Ovary (tissue), 10 donors: ENCODE measurements at regions of chr14 and their contacts with region 1.

Region 1: GRCh38 chr14:88154926-88155325 is 150.0 kb downstream of the GPR65 start:
- DNase-seq: no peak
- H3K4me3 ChIP-seq: no peak overlapping the region
- H3K27ac ChIP-seq: no peak overlapping the region
- H3K4me1 ChIP-seq: no peaks in the 10 kb centered on the region
- H3K27me3 ChIP-seq: no peaks in the 10 kb centered on the region
- CTCF ChIP-seq: no peak
- EP300 ChIP-seq: no peak
- POLR2A ChIP-seq: no peak

Region 2: GRCh38 chr14:86946446-86946845 is 1208.5 kb before region 1 on chr14:
- intact Hi-C with region 1: loop called in 1 of 4 experiments (anchors 5 kb)
- DNase-seq: no peak
- H3K4me3 ChIP-seq: no peak overlapping the region
- H3K27ac ChIP-seq: no peak overlapping the region
- H3K4me1 ChIP-seq: no peaks in the 10 kb centered on the region
- H3K27me3 ChIP-seq: no peaks in the 10 kb centered on the region
- CTCF ChIP-seq: no peak
- EP300 ChIP-seq: no peak
- POLR2A ChIP-seq: no peak

Region 3: DNA sequence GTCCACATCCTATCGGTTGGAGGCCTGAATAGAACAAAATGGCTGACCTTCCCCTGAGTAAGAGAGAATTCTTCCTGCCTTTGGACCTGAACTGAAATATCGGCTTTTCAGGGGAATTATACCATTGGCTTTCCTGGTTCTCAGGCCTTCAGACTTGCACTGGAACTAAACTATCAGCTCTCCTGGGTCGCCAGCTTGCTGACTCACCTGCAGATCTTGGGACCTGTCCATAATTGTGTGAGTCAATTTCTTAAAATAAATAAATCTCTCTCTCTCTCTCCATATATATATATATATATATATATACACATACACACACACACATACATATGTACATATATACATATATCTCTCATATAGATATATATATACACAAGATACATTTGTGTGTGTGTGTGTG is 126.5 kb after region 1 on chr14:
- intact Hi-C with region 1: no loop called
- DNase-seq: no peak
- H3K4me3 ChIP-seq: no peak overlapping the region
- H3K27ac ChIP-seq: no peak overlapping the region
- H3K4me1 ChIP-seq: no peaks in the 10 kb centered on the region
- H3K27me3 ChIP-seq: no peaks in the 10 kb centered on the region
- CTCF ChIP-seq: no peak
- EP300 ChIP-seq: no peak
- POLR2A ChIP-seq: no peak